Heart right ventricle (tissue), 16 donors: ENCODE measurements at regions of chr5 and their contacts with region 1.

Region 1: GRCh38 chr5:150895431-150896428 is 9.1 kb downstream of the ZNF300 start:
- DNase-seq: no peak
- ATAC-seq: no peak
- H3K4me3 ChIP-seq: no peak overlapping the region
- H3K27ac ChIP-seq: no peak overlapping the region
- H3K4me1 ChIP-seq: no peaks in the 10 kb centered on the region
- H3K27me3 ChIP-seq: no peaks in the 10 kb centered on the region
- CTCF ChIP-seq: no peak

Region 2: DNA sequence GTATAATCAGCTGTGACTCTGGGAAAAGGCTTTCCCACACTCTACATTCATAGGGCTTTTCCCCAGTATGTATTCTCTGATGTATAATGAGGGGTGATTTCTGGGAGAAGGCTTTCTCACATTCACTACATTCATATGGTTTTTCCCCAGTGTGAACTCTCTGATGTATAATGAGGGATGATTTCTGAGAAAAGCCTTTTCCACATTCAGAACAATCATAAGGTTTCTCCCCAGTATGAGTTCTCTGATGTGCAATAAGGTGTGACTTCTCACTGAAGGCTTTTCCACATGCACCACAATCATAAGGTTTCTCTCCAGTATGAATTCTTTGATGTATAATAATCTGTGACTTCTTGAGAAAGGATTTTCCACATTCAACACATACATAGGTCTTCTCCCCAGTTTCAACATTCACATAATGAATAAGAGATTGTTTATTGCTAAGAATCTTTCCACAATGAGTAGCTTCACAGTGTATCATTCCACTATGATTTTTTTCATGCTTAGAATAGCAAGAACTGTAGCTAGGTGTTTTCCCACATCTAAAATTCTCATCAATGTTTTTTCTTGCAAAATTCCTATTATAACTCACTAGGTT is 35.7 kb after region 1 on chr5:
- intact Hi-C with region 1: loop called in 1 of 10 experiments (anchors 5 kb)
- DNase-seq: no peak
- ATAC-seq: no peak
- H3K4me3 ChIP-seq: no peak overlapping the region
- H3K27ac ChIP-seq: no peak overlapping the region
- H3K4me1 ChIP-seq: no peaks in the 10 kb centered on the region
- H3K27me3 ChIP-seq: no peaks in the 10 kb centered on the region
- CTCF ChIP-seq: no peak